ENCODE measurements at regions of chr4 and their contacts with region 1.

Region 1: DNA sequence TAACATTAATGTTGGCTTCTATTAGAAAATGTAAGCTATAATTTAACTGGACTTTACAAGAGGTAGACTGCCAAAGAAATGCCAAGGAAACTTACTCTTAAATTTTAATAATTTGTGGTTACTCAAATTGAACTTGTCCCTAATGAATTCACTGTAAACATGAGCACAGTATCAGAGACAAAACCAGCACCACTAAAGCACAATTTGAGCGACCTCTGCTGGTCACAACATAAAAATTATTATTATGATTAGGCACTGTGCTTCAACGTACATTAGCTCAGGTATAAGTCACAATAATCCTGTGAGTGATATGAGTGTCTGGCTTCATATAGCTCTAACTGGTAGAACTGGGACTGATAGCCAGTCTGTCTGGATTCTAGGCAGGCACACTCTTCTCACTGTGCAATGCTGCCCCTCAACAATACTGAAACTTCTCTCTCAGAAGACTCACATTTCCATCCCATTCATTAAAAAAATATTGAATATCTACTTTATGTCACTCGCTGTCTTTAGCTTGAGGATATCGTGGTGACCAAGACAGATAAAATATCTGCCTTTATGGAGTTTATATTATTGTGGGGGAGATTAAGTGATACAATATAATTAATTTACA is 8.0 kb downstream of the NUDT6 start:
- DNase-seq: peak; percentile 43
- H3K4me3 Mint-ChIP-seq: no peak overlapping the region
- H3K27ac Mint-ChIP-seq: no peak overlapping the region
- H3K4me1 Mint-ChIP-seq: peaks cover 14% of the 10 kb centered on the region
- H3K27me3 Mint-ChIP-seq: no peaks in the 10 kb centered on the region
- CTCF ChIP-seq: peak; percentile 46

Region 2: DNA sequence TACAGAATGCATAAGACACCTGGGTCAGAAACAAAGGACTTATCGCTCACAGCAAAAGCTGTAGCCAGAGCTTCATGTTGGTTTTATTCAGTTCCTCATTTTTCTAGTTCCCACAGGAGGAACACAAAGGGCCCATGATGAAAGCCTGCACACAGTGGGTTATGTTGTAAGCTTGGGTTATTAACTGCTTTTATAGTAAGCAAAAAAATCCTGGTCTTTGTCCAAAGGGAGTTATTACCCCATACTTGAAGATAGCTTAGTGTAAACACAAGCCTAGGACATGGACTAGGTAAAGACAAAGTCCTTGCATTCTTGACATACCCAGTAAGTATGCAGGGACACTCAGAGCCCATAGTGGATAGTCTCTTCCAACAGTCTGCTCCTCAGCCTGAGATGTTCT is 170.2 kb before region 1 on chr4:
- CTCF ChIA-PET with region 1: interaction called, 15 read pairs
- POLR2A ChIA-PET with region 1: interaction called, 5 read pairs
- intact Hi-C with region 1: no loop called
- DNase-seq: peak; percentile 76
- H3K4me3 Mint-ChIP-seq: no peak overlapping the region
- H3K27ac Mint-ChIP-seq: no peak overlapping the region
- H3K4me1 Mint-ChIP-seq: peaks cover 4% of the 10 kb centered on the region
- H3K27me3 Mint-ChIP-seq: no peaks in the 10 kb centered on the region
- CTCF ChIP-seq: no peak

Region 3: GRCh38 chr4:122764821-122765215 is 149.6 kb before region 1 on chr4:
- CTCF ChIA-PET with region 1: interaction called, 134 read pairs
- POLR2A ChIA-PET with region 1: interaction called, 8 read pairs
- intact Hi-C with region 1: no loop called
- DNase-seq: peak; percentile 76
- H3K4me3 Mint-ChIP-seq: peak overlapping the region; percentile 51
- H3K27ac Mint-ChIP-seq: peak overlapping the region; percentile 92
- H3K4me1 Mint-ChIP-seq: peaks cover 17% of the 10 kb centered on the region
- H3K27me3 Mint-ChIP-seq: no peaks in the 10 kb centered on the region
- CTCF ChIP-seq: no peak

Region 4: GRCh38 chr4:122783301-122784215 is 130.8 kb before region 1 on chr4:
- CTCF ChIA-PET with region 1: interaction called, 16 read pairs
- POLR2A ChIA-PET with region 1: interaction called, 3 read pairs
- intact Hi-C with region 1: no loop called
- DNase-seq: peak; percentile 77
- H3K4me3 Mint-ChIP-seq: peak overlapping the region; percentile 3
- H3K27ac Mint-ChIP-seq: peak overlapping the region; percentile 57
- H3K4me1 Mint-ChIP-seq: peaks cover 31% of the 10 kb centered on the region
- H3K27me3 Mint-ChIP-seq: no peaks in the 10 kb centered on the region
- CTCF ChIP-seq: no peak

Region 5: GRCh38 chr4:122827879-122828601 is 86.4 kb before region 1 on chr4:
- CTCF ChIA-PET with region 1: interaction called, 11 read pairs
- POLR2A ChIA-PET with region 1: interaction called, 5 read pairs
- intact Hi-C with region 1: loop called (anchors 1 kb)
- DNase-seq: peak; percentile 75
- H3K4me3 Mint-ChIP-seq: peak overlapping the region; percentile 77
- H3K27ac Mint-ChIP-seq: peak overlapping the region; percentile 91
- H3K4me1 Mint-ChIP-seq: peaks cover 26% of the 10 kb centered on the region
- H3K27me3 Mint-ChIP-seq: no peaks in the 10 kb centered on the region
- CTCF ChIP-seq: no peak

Region 6: DNA sequence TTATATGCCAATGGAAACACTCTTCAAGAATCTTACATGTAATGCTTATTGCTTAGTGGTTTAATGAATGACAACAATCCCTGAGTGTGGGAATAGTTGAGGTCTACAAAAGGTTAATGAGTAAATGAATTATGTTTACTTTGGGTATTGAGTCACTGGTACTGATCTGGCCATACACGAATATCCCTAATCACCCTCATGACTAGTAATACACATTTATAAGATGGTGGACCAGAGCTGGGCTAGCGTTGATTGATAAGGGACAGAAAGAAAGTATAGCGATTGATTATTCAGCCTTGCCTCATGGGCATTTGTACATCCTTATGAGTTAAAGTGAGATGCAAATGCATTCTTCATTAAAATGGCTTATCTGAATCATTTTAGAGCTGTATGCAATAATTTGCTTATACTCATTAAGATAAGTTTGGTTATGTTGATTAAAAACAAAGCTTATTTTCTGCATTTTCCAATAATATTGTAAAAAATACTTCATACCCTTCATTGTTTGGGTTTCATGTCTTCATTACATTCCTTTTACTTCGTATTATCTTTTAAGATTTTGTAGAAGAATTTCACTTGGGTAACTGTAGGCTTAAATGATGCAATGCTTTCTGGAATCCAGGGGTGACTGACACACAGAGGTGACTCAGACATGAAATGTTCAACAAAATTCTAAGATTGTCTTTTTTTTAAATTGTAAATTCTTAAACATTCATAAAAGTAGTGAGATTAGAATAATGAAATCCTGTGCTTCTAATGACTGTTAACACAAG is 40.4 kb before region 1 on chr4:
- CTCF ChIA-PET with region 1: interaction called, 10 read pairs
- POLR2A ChIA-PET with region 1: no interaction called
- intact Hi-C with region 1: no loop called
- DNase-seq: peak; percentile 73
- H3K4me3 Mint-ChIP-seq: no peak overlapping the region
- H3K27ac Mint-ChIP-seq: peak overlapping the region; percentile 82
- H3K4me1 Mint-ChIP-seq: peaks cover 47% of the 10 kb centered on the region
- H3K27me3 Mint-ChIP-seq: no peaks in the 10 kb centered on the region
- CTCF ChIP-seq: no peak

Region 7: DNA sequence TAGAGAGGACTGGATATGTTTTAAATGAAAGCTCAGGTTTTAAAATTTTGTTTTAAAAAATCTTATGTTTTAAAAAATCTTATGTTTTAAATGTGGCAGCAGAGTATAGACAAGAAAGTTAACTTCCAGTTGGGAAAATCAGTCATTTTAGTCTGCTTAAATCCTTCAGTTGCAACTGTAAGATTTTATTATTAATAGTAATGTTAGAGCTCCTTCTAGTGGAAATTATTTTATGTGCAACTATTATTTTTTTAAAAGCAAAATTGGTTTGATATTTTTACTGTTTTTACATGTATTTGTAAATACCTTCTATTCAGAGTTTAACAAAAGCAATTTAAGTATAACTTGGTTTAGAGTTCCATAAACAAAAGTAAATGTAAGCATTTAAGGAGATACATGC is 16.5 kb after region 1 on chr4:
- CTCF ChIA-PET with region 1: interaction called, 22 read pairs
- POLR2A ChIA-PET with region 1: no interaction called
- intact Hi-C with region 1: no loop called
- DNase-seq: peak; percentile 13
- H3K4me3 Mint-ChIP-seq: no peak overlapping the region
- H3K27ac Mint-ChIP-seq: no peak overlapping the region
- H3K4me1 Mint-ChIP-seq: no peaks in the 10 kb centered on the region
- H3K27me3 Mint-ChIP-seq: no peaks in the 10 kb centered on the region
- CTCF ChIP-seq: peak; percentile 51

Measured in MCF 10A (cell line).